AG04450 (cell line): ENCODE measurements at regions of chr18 and their contacts with region 1.

Region 1: DNA sequence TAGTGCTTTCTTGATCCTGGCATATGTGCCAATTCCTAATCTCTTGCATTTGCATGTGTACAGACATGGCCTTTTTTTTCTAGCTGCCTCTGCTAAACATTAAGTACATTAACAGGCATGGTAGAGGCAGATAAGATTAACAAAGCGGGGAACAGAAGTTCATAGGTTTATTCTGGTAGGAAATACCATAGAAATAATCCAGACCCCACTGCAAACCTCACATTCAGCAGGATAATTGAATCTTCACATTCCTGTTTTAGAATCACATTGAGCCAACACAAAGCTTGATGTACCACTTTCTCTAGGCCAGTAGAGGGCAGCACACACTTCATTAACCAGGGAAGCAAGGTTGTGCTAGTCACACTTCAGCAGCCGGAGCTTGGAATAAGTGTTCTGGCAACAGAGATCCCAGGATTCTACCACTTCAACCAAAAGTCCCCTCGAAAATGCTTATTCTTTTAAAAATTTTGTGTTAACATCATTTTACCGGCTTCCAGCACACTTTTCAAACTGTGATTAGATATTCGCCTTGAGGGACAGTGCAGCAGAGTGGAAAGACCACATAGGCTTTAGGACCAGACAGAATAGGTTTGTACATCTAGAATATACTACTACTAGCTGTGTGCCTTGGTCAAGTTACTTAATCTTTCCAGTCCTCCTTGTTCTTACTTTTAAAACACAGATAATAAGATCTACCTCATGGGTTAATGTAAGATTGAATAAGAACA is 420.2 kb upstream of the CHST9 start:
- DNase-seq: peak; percentile 36
- H3K4me3 ChIP-seq: no peak overlapping the region
- H3K27ac ChIP-seq: no peak overlapping the region
- H3K27me3 ChIP-seq: no peaks in the 10 kb centered on the region
- CTCF ChIP-seq: peak; percentile 88

Region 2: DNA sequence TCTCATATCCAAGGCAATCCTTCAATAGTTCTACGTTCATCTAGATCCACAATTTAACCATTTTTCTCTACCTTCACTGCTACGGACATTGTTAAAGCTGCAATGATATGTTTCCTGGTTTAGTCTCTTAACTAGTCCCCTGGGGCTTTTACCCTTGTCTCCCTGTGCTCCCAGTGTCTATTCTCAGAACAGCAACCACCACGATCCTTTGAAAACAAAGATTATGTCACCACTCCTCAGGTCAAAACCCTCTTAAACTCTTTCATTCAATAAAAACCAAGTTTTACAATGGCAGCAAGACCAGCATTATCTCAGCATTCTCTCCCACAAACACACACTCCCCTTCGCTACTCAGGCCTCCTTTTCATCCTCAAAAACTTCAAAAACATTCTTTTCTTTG is 122.0 kb before region 1 on chr18:
- CTCF ChIA-PET with region 1: no interaction called
- POLR2A ChIA-PET with region 1: no interaction called
- DNase-seq: no peak
- H3K4me3 ChIP-seq: no peak overlapping the region
- H3K27ac ChIP-seq: no peak overlapping the region
- H3K27me3 ChIP-seq: no peaks in the 10 kb centered on the region
- CTCF ChIP-seq: no peak

Region 3: GRCh38 chr18:27616324-27616723 is 11.1 kb after region 1 on chr18:
- CTCF ChIA-PET with region 1: interaction called, 14 read pairs
- POLR2A ChIA-PET with region 1: no interaction called
- DNase-seq: no peak
- H3K4me3 ChIP-seq: no peak overlapping the region
- H3K27ac ChIP-seq: no peak overlapping the region
- H3K27me3 ChIP-seq: no peaks in the 10 kb centered on the region
- CTCF ChIP-seq: no peak

Region 4: DNA sequence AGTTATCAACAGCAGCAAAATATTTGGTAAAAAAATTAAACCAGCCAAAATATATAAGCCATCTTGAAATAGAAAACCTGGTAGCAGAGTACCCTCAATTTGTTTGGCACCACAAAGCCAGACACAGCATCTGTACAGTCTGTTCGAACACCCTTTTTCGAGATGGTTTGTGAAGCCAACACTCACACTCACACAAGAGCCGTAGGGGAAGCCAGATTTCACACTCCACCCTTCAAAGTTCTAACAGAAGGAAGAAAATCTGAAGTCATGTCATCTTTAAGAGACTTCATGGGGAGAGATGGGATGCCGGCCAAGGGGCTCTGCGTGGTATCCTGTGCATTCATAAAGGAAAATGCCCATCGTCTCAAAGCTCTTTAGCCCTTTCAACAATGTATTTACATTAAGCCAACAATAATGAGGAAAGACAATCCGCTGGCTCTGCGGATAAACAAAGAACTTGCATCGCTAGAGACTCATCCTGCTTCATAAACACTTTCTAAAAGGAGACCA is 31.4 kb after region 1 on chr18:
- CTCF ChIA-PET with region 1: no interaction called
- POLR2A ChIA-PET with region 1: no interaction called
- DNase-seq: no peak
- H3K4me3 ChIP-seq: no peak overlapping the region
- H3K27ac ChIP-seq: no peak overlapping the region
- H3K27me3 ChIP-seq: no peaks in the 10 kb centered on the region
- CTCF ChIP-seq: no peak